Natural killer cell (primary cell): ENCODE measurements at regions of chr11 and their contacts with region 1.

Region 1: GRCh38 chr11:112280268-112281126 is 19.8 kb upstream of the PLET1 start:
- DNase-seq: peak; percentile 50 to 90
- ATAC-seq: peak; percentile 90 to 93 (median 91)
- H3K4me3 ChIP-seq: peak overlapping the region; percentile 55
- H3K4me3 Mint-ChIP-seq: peak overlapping the region; percentile 95
- H3K27ac ChIP-seq: peak overlapping the region; percentile 10
- H3K27ac Mint-ChIP-seq: peak overlapping the region; percentile 73 to 81
- H3K4me1 ChIP-seq: peaks cover 15% of the 10 kb centered on the region
- H3K4me1 Mint-ChIP-seq: peaks cover 12 to 16% of the 10 kb centered on the region in 2 donors
- H3K27me3 ChIP-seq: no peaks in the 10 kb centered on the region
- H3K27me3 Mint-ChIP-seq: peaks cover 0 to 3% of the 10 kb centered on the region in 2 donors
- CTCF ChIP-seq: peak; percentile 48

Region 2: GRCh38 chr11:111933872-111934271 is 346.6 kb before region 1 on chr11:
- intact Hi-C with region 1: loop called (anchors 5 kb)
- DNase-seq: no peak
- ATAC-seq: no peak
- H3K4me3 ChIP-seq: no peak overlapping the region
- H3K4me3 Mint-ChIP-seq: no peak overlapping the region
- H3K27ac ChIP-seq: no peak overlapping the region
- H3K27ac Mint-ChIP-seq: no peak overlapping the region
- H3K4me1 ChIP-seq: peaks cover 25% of the 10 kb centered on the region
- H3K4me1 Mint-ChIP-seq: peaks cover 24 to 31% of the 10 kb centered on the region in 2 donors
- H3K27me3 ChIP-seq: no peaks in the 10 kb centered on the region
- H3K27me3 Mint-ChIP-seq: peaks cover 0 to 3% of the 10 kb centered on the region in 2 donors
- CTCF ChIP-seq: no peak

Region 3: DNA sequence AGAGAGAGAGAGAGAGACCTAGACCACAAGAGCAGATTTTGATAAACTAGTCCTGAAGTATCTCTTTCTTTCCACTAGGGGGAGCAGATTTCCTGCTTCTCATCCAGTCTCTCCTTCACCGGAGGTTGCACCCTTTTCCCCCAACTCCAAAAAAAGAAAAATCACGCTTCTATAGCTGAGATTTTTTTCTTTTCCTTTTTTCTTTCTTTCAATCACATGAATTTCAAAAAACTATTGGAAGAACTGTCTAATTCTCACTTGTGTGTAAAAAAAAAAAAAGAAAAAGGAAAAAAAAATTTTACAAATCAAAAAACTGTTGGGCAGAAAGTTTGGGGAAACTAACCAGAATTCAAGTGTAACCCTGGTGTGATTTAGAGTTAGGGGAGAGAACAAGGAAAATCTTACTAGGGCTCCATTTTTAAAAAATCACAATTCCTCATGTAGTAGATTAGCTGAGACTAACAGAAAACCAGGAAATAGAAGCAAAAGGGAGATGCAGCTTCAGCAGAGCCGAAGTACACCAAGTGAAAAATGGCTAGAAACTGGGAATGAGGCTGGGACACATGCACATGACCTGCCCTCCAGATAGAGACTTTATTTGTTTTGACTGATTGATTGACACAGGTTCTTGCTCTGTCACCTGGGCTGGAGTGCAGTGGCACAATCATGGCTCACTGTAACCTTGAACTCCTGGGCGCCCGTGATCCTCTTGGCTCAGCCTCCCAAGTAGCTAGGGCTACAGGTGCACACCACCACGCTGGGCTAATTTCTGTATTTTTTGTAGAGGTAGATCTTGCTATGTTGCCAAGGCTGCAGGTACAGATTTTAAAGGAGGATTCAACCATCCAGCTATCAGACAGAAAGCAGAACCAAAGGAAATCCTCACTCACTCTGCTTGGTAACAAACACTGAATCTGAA is 166.7 kb before region 1 on chr11:
- intact Hi-C with region 1: loop called (anchors 1 kb)
- DNase-seq: peak in 1 of 2 donors; percentile 67
- ATAC-seq: peak; percentile 69 to 78 (median 77)
- H3K4me3 ChIP-seq: no peak overlapping the region
- H3K4me3 Mint-ChIP-seq: peak overlapping the region; percentile 17
- H3K27ac ChIP-seq: no peak overlapping the region
- H3K27ac Mint-ChIP-seq: no peak overlapping the region
- H3K4me1 ChIP-seq: no peaks in the 10 kb centered on the region
- H3K4me1 Mint-ChIP-seq: peaks cover 4 to 5% of the 10 kb centered on the region in 2 donors
- H3K27me3 ChIP-seq: no peaks in the 10 kb centered on the region
- H3K27me3 Mint-ChIP-seq: no peaks in the 10 kb centered on the region
- CTCF ChIP-seq: peak; percentile 79

Region 4: DNA sequence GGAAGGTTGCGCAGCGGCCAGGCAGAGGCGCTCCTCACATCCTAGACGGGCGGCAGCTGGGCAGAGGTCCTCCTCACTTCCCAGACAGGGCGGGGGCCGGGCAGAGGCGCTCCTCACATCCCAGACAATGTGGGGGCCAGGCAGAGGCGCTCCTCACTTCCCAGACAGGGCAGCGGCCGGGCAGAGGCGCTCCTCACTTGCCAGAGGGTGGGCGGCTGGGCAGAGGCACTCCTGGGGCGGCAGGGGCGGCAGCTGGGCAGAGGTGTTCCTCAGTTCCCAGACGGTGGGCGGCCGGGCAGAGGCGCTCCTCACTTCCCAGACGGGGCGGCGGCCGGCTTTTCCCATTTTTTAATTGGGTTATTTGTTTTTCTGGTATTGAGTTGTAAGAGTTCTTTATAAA is 74.4 kb before region 1 on chr11:
- intact Hi-C with region 1: no loop called
- DNase-seq: no peak
- ATAC-seq: no peak
- H3K4me3 ChIP-seq: no peak overlapping the region
- H3K4me3 Mint-ChIP-seq: no peak overlapping the region
- H3K27ac ChIP-seq: no peak overlapping the region
- H3K27ac Mint-ChIP-seq: no peak overlapping the region
- H3K4me1 ChIP-seq: no peaks in the 10 kb centered on the region
- H3K4me1 Mint-ChIP-seq: no peaks in the 10 kb centered on the region
- H3K27me3 ChIP-seq: no peaks in the 10 kb centered on the region
- H3K27me3 Mint-ChIP-seq: no peaks in the 10 kb centered on the region
- CTCF ChIP-seq: no peak